Activated B cell treated with CpG ODN at 0.5 μM for 24 hours (primary cell): ENCODE measurements at regions of chr4 and their contacts with region 1.

Region 1: DNA sequence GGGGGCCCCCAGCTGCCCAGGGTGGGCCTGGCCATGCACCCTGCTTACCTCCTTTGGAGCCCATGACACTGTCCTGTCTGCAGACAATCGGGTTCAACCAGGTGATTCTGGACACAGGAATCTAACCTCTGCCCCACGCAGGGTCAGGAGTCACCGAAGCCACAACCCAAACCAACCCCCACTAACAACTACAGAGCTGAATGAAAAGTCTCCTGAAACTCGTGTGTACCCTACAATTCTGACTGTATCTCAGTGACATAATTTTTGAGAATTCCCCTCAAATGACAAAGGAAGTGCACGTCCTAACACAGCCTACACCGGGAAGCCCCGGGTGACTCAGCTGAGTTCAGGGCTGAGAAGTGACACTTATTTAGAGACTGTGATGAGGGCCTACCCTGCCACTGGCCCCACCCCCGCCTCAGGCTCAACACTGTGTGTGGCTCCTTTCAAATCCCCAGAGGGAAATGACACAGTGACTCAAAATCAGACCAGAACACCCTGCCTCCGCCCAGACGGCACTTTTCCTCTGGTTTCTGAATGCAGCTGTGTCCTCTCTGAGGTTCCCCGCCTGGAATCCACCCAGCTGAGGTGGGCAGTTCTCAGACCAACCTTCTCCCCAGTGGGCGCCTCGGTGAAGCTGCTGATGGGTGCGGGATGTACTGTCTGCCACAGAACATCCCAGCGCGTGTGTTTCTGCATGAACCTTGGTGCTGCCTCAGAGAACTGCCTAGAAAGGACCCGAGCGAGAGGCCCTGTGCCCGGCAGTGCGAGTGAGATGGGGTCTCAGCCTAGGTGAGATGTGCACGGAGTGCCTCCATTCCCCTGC is 9.9 kb downstream of the TNIP2 start:
- DNase-seq: peak; percentile 81
- ATAC-seq: peak; percentile 95
- H3K4me3 Mint-ChIP-seq: peak overlapping the region; percentile 68
- H3K27ac Mint-ChIP-seq: peak overlapping the region; percentile 94
- H3K4me1 Mint-ChIP-seq: peaks cover 55% of the 10 kb centered on the region
- H3K27me3 Mint-ChIP-seq: no peaks in the 10 kb centered on the region
- CTCF ChIP-seq: no peak

Region 2: DNA sequence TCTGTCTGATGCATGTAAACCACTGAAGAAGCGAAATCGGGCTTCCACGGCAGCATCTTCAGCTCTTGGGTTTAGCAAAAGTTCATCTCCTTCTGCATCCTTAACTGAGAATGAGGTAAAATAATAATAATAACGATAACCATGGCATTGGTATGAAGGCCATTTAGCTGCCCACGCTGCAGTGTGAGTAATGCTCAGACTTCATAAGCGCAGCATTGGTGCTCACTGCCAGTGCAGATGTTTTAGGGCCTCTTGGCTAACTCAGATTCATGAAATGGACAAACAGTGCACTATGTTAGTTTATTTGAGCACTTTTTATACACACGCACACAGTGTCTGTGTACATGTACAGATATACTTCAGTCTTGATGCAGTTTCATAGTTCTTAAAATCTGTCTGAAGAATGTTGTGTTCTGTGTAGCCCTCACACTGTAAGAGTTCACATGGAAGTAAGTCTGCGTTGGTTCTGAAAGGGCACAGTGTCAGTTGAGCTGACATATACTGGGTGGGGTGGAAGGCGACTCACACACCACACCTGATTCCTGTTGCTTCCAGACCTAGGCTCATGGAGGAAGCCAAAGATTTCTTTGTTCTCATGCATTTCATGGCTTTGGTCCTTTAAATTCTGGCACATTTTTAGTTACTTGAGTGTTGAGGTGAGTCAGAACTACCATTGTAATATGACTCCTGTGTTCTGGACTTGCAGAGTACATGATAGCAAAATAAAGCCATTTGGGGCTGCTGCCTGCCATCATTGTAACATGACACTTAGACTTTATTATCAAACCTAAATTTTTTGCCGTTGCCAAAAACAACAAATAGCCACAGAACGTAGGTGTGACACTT is 806.3 kb before region 1 on chr4:
- CTCF ChIA-PET with region 1: no interaction called
- POLR2A ChIA-PET with region 1: no interaction called
- intact Hi-C with region 1: no loop called
- DNase-seq: no peak
- ATAC-seq: no peak
- H3K4me3 Mint-ChIP-seq: no peak overlapping the region
- H3K27ac Mint-ChIP-seq: no peak overlapping the region
- H3K4me1 Mint-ChIP-seq: no peaks in the 10 kb centered on the region
- H3K27me3 Mint-ChIP-seq: no peaks in the 10 kb centered on the region
- CTCF ChIP-seq: no peak

Region 3: DNA sequence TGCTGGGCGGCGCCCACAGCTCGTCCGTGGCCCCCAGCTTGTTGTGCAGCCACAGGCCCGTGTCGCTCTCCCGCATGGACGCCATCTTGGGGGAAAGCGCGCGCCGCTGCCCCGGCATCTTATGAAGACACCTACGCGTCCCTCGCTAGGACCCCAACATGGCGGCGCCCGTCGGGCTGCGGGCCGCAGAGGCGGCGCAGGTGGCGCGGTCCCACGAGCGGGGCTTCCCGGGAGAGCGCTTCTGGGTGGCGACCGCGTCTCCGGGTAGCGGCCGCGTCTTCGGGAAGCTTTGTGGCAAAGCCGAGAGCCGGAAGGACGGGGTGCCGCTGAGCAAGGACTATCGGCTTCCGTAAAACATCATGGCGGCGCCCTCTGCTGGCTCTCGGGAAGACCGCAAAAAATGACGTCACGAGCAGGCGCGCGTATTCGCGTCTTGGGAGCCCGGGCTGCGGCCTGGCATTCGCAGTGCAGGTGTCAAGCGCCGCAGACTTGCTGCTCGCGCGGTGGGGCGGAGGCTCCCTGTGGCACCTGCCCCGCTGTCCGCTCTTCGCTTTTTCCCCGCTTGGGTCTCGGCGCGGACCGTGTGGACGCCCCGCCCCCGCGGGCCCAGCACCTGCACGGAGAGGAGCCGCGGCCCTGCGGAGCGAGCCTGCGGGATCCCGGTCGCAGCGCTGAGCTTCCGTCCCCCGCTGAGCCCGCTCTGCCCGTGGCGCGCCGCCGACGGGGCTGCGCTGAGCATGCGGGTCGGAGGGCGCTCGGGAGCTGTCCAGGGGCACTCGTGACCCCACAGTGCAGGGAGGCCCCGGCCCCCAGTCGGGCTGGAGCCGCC is 737.1 kb before region 1 on chr4 and contains the start of gene NELFA:
- CTCF ChIA-PET with region 1: no interaction called
- POLR2A ChIA-PET with region 1: no interaction called
- intact Hi-C with region 1: loop called (anchors 5 kb)
- DNase-seq: peak; percentile 93
- ATAC-seq: peak; percentile 80
- H3K4me3 Mint-ChIP-seq: peak within 1 kb of the TSS; percentile 90
- H3K27ac Mint-ChIP-seq: peak within 1 kb of the TSS; percentile 91
- H3K4me1 Mint-ChIP-seq: peaks cover 32% of the 10 kb centered on the region
- H3K27me3 Mint-ChIP-seq: peaks cover 4% of the 10 kb centered on the region
- CTCF ChIP-seq: no peak
- total RNA-seq, gene NELFA: 44.7 and 49.9 TPM in 2 replicates

Region 4: DNA sequence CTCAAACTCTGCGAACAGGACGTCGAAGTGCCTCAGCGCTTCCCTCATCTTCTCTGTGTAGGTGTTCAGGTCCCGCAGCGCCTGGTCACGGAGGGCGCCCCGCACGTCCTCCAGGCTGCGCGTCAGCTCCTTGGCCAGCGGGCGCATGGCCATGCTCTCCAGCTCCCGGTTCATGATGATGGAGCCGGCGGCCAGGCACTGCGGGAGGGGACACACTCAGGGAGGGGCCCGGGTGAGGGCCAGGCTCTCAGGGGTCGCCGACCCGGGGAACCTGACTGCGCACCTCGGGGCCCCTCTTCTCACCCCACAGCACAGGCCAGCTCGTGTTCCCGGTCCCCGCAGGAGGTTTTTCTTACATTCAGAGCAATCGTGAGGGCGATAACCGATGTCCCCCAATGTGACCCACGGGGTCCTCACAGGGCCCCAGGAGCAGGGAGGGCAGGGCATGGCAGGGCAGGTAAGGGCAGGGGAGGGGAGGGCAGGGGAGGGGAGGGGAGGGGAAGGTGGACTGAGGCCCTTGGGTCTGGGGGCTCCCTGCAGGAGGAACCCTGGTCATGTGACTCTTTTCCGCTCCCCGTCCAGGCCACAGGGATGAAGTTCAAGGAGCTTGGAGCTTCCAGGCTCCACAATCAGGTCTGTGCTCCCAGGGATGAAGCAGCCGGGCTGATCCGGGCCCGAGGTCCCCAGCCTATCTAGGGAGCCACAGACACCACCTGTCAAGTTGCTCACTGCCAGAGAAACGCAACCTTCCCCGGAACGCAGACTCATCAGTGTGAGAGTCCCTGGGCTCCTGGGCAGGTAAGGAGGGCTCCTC is 406.5 kb before region 1 on chr4:
- CTCF ChIA-PET with region 1: no interaction called
- POLR2A ChIA-PET with region 1: no interaction called
- intact Hi-C with region 1: no loop called
- DNase-seq: no peak
- ATAC-seq: no peak
- H3K4me3 Mint-ChIP-seq: no peak overlapping the region
- H3K27ac Mint-ChIP-seq: no peak overlapping the region
- H3K4me1 Mint-ChIP-seq: peaks cover 6% of the 10 kb centered on the region
- H3K27me3 Mint-ChIP-seq: peaks cover 3% of the 10 kb centered on the region
- CTCF ChIP-seq: no peak

Region 5: DNA sequence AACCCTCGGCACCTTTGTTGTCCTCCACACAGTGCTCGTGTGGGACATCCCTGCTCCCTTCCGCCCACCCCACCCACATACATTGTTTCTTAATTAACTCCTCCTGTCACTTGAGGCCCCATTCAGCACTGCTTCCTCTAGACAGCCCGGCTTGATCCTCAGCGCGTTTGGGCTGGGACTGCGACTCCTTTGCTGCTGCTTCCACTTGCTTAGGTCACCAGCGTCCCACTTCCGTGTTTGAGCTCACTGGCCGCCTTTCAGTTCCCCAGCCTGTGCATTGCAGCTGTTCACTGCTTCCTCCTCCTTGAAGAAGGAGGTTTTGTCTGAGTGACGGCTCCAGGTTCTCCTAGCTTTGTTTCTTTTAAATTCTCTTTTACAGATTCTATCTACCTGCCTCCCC is 261.2 kb before region 1 on chr4:
- CTCF ChIA-PET with region 1: no interaction called
- POLR2A ChIA-PET with region 1: interaction called, 3 read pairs
- intact Hi-C with region 1: loop called (anchors 5 kb)
- DNase-seq: peak; percentile 64
- ATAC-seq: peak; percentile 86
- H3K4me3 Mint-ChIP-seq: peak overlapping the region; percentile 75
- H3K27ac Mint-ChIP-seq: peak overlapping the region; percentile 92
- H3K4me1 Mint-ChIP-seq: peaks cover 93% of the 10 kb centered on the region
- H3K27me3 Mint-ChIP-seq: no peaks in the 10 kb centered on the region
- CTCF ChIP-seq: no peak

Region 6: DNA sequence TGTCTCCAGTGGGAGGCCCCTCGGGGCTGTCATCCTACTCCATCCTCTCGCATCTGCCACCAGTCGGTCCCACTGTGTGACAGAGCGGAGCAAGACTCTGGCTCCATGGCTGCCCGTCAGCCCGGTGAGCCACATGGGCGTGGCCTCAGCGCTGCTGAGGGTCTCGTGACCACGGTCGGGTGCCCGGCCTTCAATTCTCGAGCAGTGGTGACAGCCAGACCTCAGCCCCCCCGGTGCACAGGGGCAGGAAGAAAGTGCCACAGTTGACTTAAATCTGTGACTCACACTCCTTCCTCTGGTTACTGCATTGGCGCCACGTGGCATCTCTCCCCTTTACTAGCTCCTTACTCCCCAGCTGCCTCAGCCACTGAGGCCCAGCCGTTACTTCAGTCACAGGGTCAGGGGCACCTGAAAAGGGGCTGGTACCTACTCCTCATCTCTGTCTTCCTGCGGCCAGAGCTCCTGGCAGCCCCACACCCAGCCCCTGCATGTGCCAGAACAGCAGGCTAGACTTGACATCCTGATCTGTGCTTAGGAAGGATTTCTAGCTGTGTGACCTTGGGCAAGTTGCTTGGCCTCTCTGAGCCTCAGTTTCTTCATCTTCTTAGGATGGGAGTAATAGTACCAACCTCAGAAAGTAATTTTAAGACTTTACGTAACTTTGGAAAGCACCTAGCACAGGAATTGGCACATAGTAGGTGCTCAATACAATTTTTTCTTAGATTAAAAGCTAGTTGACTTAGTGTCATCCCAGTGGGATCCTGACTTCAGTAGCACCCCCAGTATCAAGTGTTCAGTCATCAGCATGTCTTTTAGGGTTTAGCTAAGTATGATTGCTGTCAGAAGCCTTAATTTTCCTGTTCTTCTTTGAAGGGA is 56.1 kb before region 1 on chr4:
- CTCF ChIA-PET with region 1: interaction called, 8 read pairs
- POLR2A ChIA-PET with region 1: interaction called, 65 read pairs
- intact Hi-C with region 1: loop called (anchors 1 kb)
- DNase-seq: peak; percentile 78
- ATAC-seq: peak; percentile 85
- H3K4me3 Mint-ChIP-seq: peak overlapping the region; percentile 75
- H3K27ac Mint-ChIP-seq: peak overlapping the region; percentile 95
- H3K4me1 Mint-ChIP-seq: peaks cover 70% of the 10 kb centered on the region
- H3K27me3 Mint-ChIP-seq: no peaks in the 10 kb centered on the region
- CTCF ChIP-seq: no peak

Region 7: DNA sequence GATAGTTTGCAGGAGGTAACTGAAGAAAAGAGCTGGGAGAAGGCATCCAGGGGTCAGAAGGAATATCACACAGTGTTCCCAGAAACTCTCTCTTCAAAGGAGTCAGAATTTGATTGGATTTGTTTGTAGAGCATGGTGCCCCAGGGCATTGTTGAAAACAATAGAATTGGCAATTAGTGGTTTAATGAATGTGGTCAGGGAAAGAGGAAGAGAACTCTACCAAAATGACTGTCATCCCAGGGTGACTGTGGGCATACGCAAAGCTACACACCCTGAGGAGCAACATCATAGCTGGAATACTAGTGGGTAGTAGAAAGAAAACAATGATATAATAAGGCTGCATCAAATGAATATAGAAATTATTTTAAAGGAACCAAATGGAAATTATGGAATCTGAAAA is 11.6 kb before region 1 on chr4:
- CTCF ChIA-PET with region 1: no interaction called
- POLR2A ChIA-PET with region 1: interaction called, 11 read pairs
- intact Hi-C with region 1: loop called (anchors 1 kb)
- DNase-seq: no peak
- ATAC-seq: peak; percentile 65
- H3K4me3 Mint-ChIP-seq: no peak overlapping the region
- H3K27ac Mint-ChIP-seq: peak overlapping the region; percentile 47
- H3K4me1 Mint-ChIP-seq: peaks cover 11% of the 10 kb centered on the region
- H3K27me3 Mint-ChIP-seq: no peaks in the 10 kb centered on the region
- CTCF ChIP-seq: no peak

Region 8: DNA sequence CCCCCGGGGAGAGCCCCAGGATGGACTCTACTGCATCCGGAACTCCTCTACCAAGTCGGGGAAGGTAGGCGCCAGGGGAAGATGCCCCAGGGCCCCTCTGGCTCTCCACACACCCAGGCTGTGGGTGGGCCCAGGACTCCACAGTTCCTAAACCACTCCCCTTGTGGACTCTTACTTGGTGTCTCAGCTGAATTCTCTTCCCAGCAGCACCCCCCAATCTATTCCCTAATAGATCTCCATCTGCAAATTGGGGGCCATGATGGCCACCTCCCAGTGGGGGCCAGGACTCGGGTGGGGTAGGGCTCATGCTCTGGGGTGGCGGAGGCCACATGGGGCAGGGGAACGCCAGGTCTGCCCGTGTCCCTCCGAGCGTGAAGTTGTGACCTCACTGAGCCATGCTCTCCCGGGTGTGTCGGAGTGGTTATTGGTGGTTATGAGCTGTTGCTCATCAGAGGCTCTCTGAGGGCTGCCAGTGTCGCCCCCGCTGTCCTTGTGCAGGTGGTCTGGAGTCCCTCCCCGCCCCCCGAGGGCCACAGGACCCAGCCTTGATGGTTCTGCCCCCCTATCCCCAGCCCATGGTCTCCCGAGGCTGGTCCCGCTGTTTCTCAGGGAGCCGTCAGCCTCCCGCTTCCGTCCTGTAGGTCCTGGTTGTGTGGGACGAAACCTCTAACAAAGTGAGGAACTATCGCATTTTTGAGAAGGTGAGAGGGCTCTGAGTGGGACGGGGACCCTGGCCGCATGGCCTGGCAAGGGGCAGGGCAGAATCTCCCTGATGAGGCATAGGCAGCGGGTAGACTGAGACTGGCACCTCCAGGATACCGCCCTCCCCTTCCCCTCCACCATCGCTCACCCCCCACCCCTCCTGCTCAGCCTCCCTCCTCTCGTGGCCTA is 86.4 kb after region 1 on chr4:
- CTCF ChIA-PET with region 1: no interaction called
- POLR2A ChIA-PET with region 1: interaction called, 4 read pairs
- intact Hi-C with region 1: loop called (anchors 1 kb)
- DNase-seq: peak; percentile 65
- ATAC-seq: peak; percentile 85
- H3K4me3 Mint-ChIP-seq: peak overlapping the region; percentile 67
- H3K27ac Mint-ChIP-seq: peak overlapping the region; percentile 83
- H3K4me1 Mint-ChIP-seq: peaks cover 60% of the 10 kb centered on the region
- H3K27me3 Mint-ChIP-seq: no peaks in the 10 kb centered on the region
- CTCF ChIP-seq: no peak

Region 9: GRCh38 chr4:3047464-3048286 is 301.5 kb after region 1 on chr4:
- CTCF ChIA-PET with region 1: no interaction called
- POLR2A ChIA-PET with region 1: no interaction called
- intact Hi-C with region 1: loop called (anchors 5 kb)
- DNase-seq: peak; percentile 75
- ATAC-seq: peak; percentile 92
- H3K4me3 Mint-ChIP-seq: peak overlapping the region; percentile 47
- H3K27ac Mint-ChIP-seq: peak overlapping the region; percentile 95
- H3K4me1 Mint-ChIP-seq: peaks cover 52% of the 10 kb centered on the region
- H3K27me3 Mint-ChIP-seq: no peaks in the 10 kb centered on the region
- CTCF ChIP-seq: no peak